ENCODE measurements at regions of chr16 and their contacts with region 1.

Region 1: DNA sequence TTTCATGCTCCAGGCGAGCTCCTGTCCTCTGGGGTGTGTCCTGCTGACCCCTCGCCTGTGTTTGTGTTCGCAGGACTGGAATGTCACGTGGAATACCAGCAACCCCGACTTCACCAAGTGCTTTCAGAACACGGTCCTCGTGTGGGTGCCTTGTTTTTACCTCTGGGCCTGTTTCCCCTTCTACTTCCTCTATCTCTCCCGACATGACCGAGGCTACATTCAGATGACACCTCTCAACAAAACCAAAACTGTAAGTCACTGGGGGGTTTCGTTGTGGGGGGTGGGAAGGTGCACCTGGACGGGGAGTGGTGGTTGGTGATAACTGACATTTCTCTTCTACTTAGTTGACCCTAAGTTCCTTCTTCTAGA is 58.3 kb downstream of the ABCC1 start:
- DNase-seq: peak; percentile 94
- H3K4me3 ChIP-seq: peak overlapping the region; percentile 53
- H3K27ac ChIP-seq: peak overlapping the region; percentile 98
- H3K4me1 ChIP-seq: peaks cover 50% of the 10 kb centered on the region
- CTCF ChIP-seq: no peak

Region 2: GRCh38 chr16:15650019-15650697 is 357.6 kb before region 1 on chr16 and contains the start of gene NDE1:
- CTCF ChIA-PET with region 1: no interaction called
- POLR2A ChIA-PET with region 1: interaction called, 14 read pairs
- intact Hi-C with region 1: no loop called
- DNase-seq: peak; percentile 93
- H3K4me3 ChIP-seq: peak within 1 kb of the TSS; percentile 93
- H3K27ac ChIP-seq: peak within 1 kb of the TSS; percentile 66
- H3K4me1 ChIP-seq: peaks cover 52% of the 10 kb centered on the region
- CTCF ChIP-seq: no peak
- total RNA-seq, gene NDE1: 76.8 and 88.9 TPM in 2 replicates

Region 3: DNA sequence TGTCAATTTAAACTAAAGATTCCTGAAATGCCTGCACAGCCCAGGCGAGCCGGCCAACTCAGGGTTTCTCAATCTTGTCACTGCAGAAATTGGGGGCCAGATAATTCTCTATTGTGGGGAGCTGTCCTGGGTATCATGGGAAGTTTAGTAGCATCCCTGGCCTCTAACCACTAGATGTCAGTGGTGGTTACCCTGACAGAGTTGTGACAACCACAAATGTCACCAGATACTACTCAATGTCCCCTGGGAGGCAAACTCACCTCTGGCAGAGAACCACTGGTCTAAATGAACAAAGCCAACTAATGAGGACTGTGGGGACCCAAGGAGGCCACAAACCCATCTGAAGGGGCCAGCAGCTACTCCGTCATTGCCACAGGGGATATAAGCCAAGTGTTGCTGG is 241.8 kb before region 1 on chr16:
- CTCF ChIA-PET with region 1: no interaction called
- POLR2A ChIA-PET with region 1: no interaction called
- intact Hi-C with region 1: no loop called
- DNase-seq: peak; percentile 94
- H3K4me3 ChIP-seq: no peak overlapping the region
- H3K27ac ChIP-seq: no peak overlapping the region
- H3K4me1 ChIP-seq: peaks cover 10% of the 10 kb centered on the region
- CTCF ChIP-seq: peak; percentile 96

Region 4: DNA sequence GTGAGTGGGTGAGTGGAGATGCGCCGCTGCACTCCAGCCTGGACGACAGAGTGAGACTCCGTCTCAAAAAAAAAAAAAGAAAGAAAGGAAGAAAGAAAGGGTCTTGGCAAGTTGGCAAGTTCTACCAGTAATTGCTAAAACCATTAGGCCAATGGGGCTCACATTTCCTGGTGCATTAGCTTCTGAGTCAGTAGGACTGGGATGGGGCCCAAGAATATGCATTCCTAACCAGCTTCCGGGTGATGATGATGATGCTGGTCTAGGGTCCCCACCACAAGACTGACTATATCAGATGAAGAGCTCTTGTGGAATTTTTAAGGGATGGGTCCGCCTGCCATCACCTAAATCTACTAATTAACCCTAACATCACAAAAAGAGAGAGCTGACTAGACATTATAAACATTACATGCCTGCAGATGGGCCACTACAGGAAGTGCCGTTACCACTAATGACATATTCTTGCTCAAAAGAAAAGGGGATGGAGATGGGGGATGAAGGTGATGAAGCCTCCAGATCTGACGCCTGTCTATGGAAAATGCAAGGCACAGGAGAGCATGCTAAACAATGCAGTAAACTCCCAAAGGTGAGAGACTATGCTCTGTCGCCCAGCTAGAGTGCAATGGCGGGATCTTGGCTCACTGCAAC is 164.0 kb before region 1 on chr16:
- CTCF ChIA-PET with region 1: no interaction called
- POLR2A ChIA-PET with region 1: no interaction called
- intact Hi-C with region 1: no loop called
- DNase-seq: no peak
- H3K4me3 ChIP-seq: no peak overlapping the region
- H3K27ac ChIP-seq: no peak overlapping the region
- H3K4me1 ChIP-seq: peaks cover 15% of the 10 kb centered on the region
- CTCF ChIP-seq: no peak

Region 5: GRCh38 chr16:15888072-15888976 is 119.4 kb before region 1 on chr16 and contains the start of gene CEP20:
- CTCF ChIA-PET with region 1: no interaction called
- POLR2A ChIA-PET with region 1: interaction called, 11 read pairs
- intact Hi-C with region 1: loop called (anchors 5 kb)
- DNase-seq: peak; percentile 100
- H3K4me3 ChIP-seq: peak within 1 kb of the TSS; percentile 94
- H3K27ac ChIP-seq: peak within 1 kb of the TSS; percentile 68
- H3K4me1 ChIP-seq: peaks cover 29% of the 10 kb centered on the region
- CTCF ChIP-seq: no peak
- total RNA-seq, gene CEP20: 33.7 and 36.6 TPM in 2 replicates

Region 6: GRCh38 chr16:15949210-15950160 is 58.2 kb before region 1 on chr16 and contains the start of gene ABCC1:
- CTCF ChIA-PET with region 1: interaction called, 3 read pairs
- POLR2A ChIA-PET with region 1: interaction called, 3 read pairs
- intact Hi-C with region 1: loop called (anchors 1 kb)
- DNase-seq: peak; percentile 74
- H3K4me3 ChIP-seq: peak within 1 kb of the TSS; percentile 81
- H3K27ac ChIP-seq: peak within 1 kb of the TSS; percentile 78
- H3K4me1 ChIP-seq: peaks cover 40% of the 10 kb centered on the region
- CTCF ChIP-seq: peak; percentile 62
- total RNA-seq, gene ABCC1: 39.9 and 43.3 TPM in 2 replicates

Region 7: GRCh38 chr16:15963307-15963910 is 44.3 kb before region 1 on chr16:
- CTCF ChIA-PET with region 1: no interaction called
- POLR2A ChIA-PET with region 1: no interaction called
- intact Hi-C with region 1: no loop called
- DNase-seq: peak; percentile 26
- H3K4me3 ChIP-seq: no peak overlapping the region
- H3K27ac ChIP-seq: no peak overlapping the region
- H3K4me1 ChIP-seq: peaks cover 12% of the 10 kb centered on the region
- CTCF ChIP-seq: no peak

Region 8: GRCh38 chr16:15996432-15997109 is 11.2 kb before region 1 on chr16:
- CTCF ChIA-PET with region 1: interaction called, 3 read pairs
- POLR2A ChIA-PET with region 1: interaction called, 10 read pairs
- intact Hi-C with region 1: no loop called
- DNase-seq: no peak
- H3K4me3 ChIP-seq: no peak overlapping the region
- H3K27ac ChIP-seq: peak overlapping the region; percentile 47
- H3K4me1 ChIP-seq: peaks cover 71% of the 10 kb centered on the region
- CTCF ChIP-seq: no peak

Region 9: DNA sequence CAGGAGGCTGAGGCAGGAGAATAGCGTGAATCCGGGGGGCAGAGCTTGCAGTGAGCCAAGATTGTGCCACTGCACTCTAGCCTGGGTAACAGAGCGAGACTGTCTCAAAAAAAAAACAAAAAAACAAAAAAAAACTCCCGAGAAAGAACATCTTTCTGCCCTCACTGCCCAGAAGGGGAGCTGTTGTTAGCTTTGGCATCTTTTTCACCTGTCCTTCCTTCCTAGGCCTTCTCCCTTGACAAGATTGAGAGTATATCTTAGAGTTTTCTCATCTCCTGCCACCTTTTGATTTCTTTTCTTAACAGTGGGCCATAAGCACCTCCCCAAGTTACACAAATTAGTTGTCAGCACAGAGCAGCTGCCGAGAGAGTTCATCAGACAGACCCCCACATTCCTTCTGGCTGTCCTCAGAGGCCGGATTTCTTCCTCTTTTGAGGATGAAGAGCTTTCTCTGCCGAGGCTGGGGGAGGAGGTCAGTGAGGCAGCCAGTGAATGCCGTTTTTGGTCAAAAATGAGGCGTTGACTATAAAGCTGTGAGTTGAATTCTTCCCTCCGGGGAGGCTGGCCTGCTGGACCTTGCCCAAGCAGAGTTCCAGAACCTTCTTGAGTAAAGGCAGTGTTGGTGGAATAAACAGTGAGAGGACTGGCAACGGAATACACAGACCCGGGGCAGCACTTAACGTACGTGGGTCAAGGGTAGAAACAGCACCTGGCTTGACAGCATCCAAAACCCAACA is 88.6 kb after region 1 on chr16:
- CTCF ChIA-PET with region 1: no interaction called
- POLR2A ChIA-PET with region 1: no interaction called
- intact Hi-C with region 1: loop called (anchors 2 kb)
- DNase-seq: peak; percentile 82
- H3K4me3 ChIP-seq: peak overlapping the region; percentile 28
- H3K27ac ChIP-seq: peak overlapping the region; percentile 100
- H3K4me1 ChIP-seq: peaks cover 66% of the 10 kb centered on the region
- CTCF ChIP-seq: peak; percentile 78

Measured in OCI-LY7 (cell line).